ENCODE measurements at regions of chr14 and their contacts with region 1.

Region 1: DNA sequence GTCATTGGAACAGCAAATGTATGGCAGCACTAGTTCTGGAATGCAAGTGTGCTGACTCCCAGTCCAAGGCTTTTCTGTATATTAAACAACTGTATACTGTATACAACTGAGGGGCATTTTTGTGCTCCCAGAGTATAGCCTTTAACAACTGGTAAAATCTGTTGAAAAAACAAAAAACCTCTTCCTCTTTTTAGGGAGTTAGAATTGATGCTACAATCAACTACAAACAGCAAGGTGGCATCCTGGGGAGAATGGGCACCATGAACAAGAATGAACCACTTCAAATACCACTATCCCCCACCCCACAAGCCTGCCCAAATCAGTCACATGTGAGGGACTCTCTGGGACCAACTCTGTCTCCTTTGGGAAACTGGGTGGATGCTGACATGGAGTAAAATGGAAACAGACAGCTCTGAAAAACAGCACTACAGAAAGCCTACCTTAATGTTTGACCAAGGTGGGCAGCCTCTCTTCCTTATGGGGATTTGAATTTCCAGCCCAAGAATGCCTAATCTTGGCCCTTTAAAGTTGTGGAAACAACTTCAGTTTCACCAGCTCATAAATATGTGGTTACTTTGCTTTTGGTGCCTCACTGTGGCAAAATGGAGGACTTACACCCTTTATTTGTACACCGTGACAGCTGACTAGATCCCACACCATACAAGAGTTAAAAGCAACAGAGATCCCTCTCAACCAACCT is 7.5 kb downstream of the VTI1B start:
- DNase-seq: peak; percentile 20
- H3K4me3 Mint-ChIP-seq: no peak overlapping the region
- H3K27ac Mint-ChIP-seq: no peak overlapping the region
- H3K4me1 Mint-ChIP-seq: peaks cover 56% of the 10 kb centered on the region
- H3K27me3 Mint-ChIP-seq: no peaks in the 10 kb centered on the region

Region 2: DNA sequence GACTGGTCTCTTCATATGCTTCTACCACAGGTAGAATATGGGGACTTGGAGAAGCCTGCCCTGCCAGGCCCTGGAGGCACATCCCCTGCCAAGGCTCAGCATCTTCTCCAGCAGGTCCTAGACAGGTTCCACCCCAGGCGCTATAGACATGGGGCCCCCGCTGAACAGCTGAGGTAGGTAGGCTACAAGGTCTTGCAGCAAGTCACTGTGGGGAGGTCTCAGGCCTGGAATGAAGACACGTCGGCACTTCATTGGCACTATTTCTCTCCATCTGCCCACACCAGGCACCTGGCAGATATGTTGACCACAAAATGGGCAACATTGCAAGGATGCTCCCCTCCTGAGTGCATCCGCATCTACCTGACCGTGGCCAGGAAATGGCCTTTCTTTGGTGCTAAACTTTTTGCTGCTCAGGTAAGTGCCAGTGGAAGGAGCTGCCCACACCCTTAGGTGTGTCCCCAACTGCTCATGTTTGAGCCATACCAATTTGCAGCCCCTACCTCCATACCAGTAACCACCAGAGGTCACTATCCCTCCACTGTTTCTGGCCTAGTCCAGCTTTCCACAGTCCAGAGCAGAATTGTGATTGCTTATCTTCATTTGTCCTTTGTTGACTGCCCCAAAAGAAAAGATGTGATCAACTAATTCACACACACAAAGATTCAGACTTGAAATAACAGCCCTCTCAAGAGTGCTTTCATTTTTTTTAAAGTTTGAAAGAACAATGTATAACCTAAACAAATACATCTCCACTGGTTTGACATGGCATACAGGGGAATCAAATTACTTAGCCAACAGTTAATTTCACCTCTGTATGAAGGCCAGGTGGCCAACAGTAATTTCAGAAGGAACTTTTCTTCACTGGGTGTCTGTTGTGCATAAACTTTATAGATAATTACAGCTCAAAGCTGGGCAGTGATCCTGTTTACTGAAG is 82.9 kb before region 1 on chr14:
- CTCF ChIA-PET with region 1: interaction called, 45 read pairs
- POLR2A ChIA-PET with region 1: no interaction called
- intact Hi-C with region 1: loop called (anchors 1 kb)
- DNase-seq: peak; percentile 32
- H3K4me3 Mint-ChIP-seq: no peak overlapping the region
- H3K27ac Mint-ChIP-seq: no peak overlapping the region
- H3K4me1 Mint-ChIP-seq: no peaks in the 10 kb centered on the region
- H3K27me3 Mint-ChIP-seq: no peaks in the 10 kb centered on the region

Region 3: GRCh38 chr14:67641902-67642749 is 24.8 kb before region 1 on chr14:
- CTCF ChIA-PET with region 1: no interaction called
- POLR2A ChIA-PET with region 1: no interaction called
- intact Hi-C with region 1: loop called (anchors 2 kb)
- DNase-seq: peak; percentile 41
- H3K4me3 Mint-ChIP-seq: no peak overlapping the region
- H3K27ac Mint-ChIP-seq: peak overlapping the region; percentile 49
- H3K4me1 Mint-ChIP-seq: peaks cover 18% of the 10 kb centered on the region
- H3K27me3 Mint-ChIP-seq: no peaks in the 10 kb centered on the region